ENCODE measurements at regions of chr6 and their contacts with region 1.

Region 1: DNA sequence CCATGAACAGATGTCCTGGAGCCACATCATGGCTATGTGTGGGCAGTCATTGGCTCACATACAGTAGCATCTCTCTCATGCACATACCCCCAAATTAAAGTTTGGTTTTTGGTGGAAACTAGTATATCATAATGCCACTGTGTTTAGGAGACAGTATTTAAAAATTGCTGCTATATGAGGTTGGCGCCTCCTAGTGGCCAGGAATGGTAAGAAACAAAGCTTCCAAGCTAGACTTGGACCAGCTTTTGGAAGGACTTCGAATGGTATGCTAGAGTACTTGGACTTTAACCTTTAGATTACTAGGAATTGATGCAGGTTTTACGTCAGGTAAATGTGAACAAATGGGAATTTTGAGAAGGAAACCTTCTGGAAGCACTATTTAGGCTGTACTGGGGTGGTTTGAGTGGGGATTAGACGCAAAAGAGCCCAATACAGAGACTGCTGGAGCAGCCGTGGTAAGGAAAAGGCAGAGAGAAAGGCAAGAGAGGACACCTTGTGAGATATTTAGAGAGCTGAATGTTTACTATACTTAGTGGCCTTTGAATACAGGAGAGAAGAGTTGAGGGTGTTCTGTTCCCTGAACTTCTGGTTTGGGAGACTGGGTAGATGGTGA is 23.8 kb downstream of the PRSS35 start:
- H3K4me3 ChIP-seq: no peak overlapping the region
- H3K27ac ChIP-seq: no peak overlapping the region
- H3K4me1 ChIP-seq: no peaks in the 10 kb centered on the region
- CTCF ChIP-seq: 0 out of 2 replicates have a peak, but pooled peaks have one; percentile 39

Region 2: GRCh38 chr6:83546636-83547035 is 10.5 kb after region 1 on chr6:
- CTCF ChIA-PET with region 1: interaction called, 11 read pairs
- POLR2A ChIA-PET with region 1: no interaction called
- H3K4me3 ChIP-seq: no peak overlapping the region
- H3K27ac ChIP-seq: no peak overlapping the region
- H3K4me1 ChIP-seq: no peaks in the 10 kb centered on the region
- CTCF ChIP-seq: no peak